Lower leg skin (tissue), 4 donors: ENCODE measurements at regions of chr13 and their contacts with region 1.

Region 1: DNA sequence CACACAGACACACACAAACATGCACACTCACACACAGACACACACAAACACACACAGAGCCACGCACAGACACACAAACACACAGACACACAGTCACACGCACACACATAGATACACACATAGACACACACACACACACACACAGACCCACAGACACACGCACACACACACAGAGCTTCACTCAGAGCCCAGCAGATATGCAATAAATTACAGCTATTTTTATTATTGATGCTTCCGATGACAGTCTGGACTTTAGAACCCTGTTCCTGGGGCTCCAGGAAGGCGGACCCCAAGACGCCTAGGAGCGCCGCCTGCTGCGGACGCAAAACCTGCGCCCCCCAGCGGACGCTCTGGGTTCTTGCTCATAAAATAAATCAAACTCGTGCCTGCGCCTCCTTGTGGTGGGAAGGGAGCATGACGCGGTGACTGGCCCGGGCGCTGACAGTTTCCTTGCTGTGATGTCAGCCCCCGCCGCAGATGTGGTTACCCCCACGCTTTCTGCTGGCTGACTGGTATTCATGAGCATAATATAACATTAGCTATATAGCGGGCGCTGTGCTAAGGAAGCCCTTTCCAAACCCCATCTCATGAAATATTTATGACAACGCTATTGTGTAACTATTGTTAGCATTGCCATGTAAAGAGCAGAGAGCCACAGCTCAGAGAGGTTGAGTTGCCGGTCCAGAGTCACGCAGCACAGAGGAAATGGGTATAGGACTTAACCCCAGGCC is 64.4 kb upstream of the TM9SF2 start:
- DNase-seq: peak; percentile 75 to 98
- H3K4me3 ChIP-seq: no peak overlapping the region
- CTCF ChIP-seq: peak in 1 of 3 donors; percentile 100
- POLR2A ChIP-seq: no peak

Region 2: GRCh38 chr13:99176309-99177276 is 260.3 kb before region 1 on chr13:
- intact Hi-C with region 1: loop called (anchors 5 kb)
- DNase-seq: peak; percentile 65 to 94
- H3K4me3 ChIP-seq: no peak overlapping the region
- CTCF ChIP-seq: peak in 1 of 3 donors; percentile 88
- POLR2A ChIP-seq: no peak

Region 3: GRCh38 chr13:99275093-99275469 is 161.8 kb before region 1 on chr13:
- intact Hi-C with region 1: loop called (anchors 5 kb)
- DNase-seq: no peak
- H3K4me3 ChIP-seq: no peak overlapping the region
- CTCF ChIP-seq: no peak
- POLR2A ChIP-seq: no peak

Region 4: DNA sequence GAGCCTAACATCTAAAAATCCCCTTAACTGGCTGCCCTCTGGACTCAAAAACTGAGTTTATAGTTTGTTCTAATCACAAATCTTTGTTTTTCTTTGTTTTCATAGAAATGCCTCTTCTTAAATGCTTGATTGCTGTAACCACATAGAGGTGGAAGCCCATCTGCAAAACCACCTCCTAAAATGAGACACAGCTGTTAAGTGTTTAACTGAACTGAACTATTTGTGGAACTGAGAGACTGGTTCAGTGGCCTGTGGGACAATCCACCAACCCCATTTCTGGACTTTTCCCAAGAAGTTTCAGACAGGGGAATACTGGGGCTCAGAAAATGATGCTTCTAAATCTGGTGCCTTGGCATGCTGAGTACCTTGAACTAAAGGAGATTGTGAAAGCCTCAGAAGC is 13.6 kb after region 1 on chr13:
- intact Hi-C with region 1: no loop called
- DNase-seq: no peak
- H3K4me3 ChIP-seq: no peak overlapping the region
- CTCF ChIP-seq: no peak
- POLR2A ChIP-seq: no peak